ENCODE measurements at regions of chr1 and their contacts with region 1.

Region 1: DNA sequence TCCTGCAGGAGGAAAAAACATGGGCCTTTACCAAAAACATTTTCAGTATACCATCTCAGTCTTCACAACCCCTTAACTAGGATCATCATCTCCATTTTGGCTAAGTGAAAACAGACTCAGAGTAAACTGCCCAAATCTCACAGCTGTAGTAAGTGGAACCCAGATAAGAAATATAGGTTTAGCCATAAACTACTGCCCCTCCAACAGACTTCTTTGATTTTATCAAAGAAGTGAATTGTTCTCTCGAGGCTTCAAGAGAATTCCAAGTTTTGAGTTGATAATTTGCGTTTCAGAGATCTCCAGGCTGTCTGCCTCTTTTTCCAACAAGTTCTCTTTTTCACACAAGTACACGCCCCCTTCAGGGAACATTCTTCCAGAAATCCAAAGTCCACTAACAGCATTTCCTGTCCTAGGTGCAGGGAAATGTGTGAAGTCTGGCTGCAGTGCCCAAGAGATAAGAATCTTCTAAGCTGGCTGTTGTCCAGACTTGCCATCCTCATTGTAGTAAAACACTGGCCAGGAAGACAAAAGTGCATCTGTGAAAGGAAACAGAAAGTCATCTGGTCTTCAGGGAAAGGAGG is 30.8 kb downstream of the RNF19B start:
- DNase-seq: peak; percentile 95
- H3K4me3 ChIP-seq: no peak overlapping the region
- H3K27ac ChIP-seq: peak overlapping the region; percentile 33
- H3K4me1 ChIP-seq: peaks cover 21% of the 10 kb centered on the region
- H3K27me3 ChIP-seq: no peaks in the 10 kb centered on the region
- CTCF ChIP-seq: no peak
- POLR2A ChIP-seq: peak; percentile 16

Region 2: GRCh38 chr1:32612189-32612881 is 321.5 kb before region 1 on chr1:
- CTCF ChIA-PET with region 1: no interaction called
- POLR2A ChIA-PET with region 1: no interaction called
- dilution Hi-C with region 1: no loop called
- intact Hi-C with region 1: no loop called
- DNase-seq: peak; percentile 86
- H3K4me3 ChIP-seq: peak overlapping the region; percentile 9 to 48 (median 44)
- H3K27ac ChIP-seq: peak overlapping the region; percentile 29
- H3K4me1 ChIP-seq: no peaks in the 10 kb centered on the region
- H3K27me3 ChIP-seq: no peaks in the 10 kb centered on the region
- CTCF ChIP-seq: peak in 1 of 2 donors; percentile 56
- POLR2A ChIP-seq: peak; percentile 90

Region 3: DNA sequence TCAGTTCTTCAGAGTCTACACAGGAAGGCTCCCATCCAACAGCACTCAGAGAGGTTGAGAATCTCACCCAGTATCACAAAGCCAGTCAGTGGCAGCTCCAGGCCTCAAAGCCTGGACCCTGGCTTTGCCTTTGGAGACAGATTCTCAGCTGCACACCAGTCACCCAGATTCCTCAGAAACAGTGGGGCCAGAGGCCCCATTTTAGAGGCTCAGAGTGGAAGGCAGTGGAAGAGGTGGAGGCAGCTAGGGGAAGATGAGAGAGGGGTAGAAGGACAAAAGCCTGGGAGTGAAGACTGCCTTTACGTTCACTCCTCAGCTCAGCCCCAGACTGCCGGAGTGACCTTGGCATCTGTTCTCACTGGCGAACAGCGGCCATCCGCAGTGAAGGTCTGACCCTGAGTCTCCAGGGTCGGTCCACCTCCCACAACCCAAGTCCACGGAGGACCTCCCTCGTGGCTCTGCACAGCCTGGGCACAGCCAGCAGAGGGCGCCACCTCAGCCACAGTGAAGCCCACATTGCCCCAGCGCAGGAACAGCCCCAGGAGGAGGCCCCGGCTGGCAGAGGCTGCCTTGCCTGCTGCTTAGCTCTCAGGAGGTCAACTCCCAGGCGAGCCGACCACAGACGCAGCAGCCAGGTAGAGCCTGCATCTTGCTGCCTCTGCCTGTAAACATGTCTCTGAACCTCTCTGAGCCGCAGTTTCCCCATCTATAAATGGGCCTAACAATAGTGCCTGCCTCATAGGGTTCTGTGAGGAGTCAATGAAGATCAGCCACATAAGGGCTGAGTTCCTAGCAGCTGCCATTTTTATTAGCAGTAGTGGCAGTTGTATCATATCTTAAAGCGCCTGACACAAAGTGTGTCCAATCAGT is 57.3 kb before region 1 on chr1:
- CTCF ChIA-PET with region 1: interaction called, 8 read pairs
- POLR2A ChIA-PET with region 1: no interaction called
- dilution Hi-C with region 1: no loop called
- intact Hi-C with region 1: loop called (anchors 2 kb)
- DNase-seq: peak; percentile 58
- H3K4me3 ChIP-seq: no peak overlapping the region
- H3K27ac ChIP-seq: no peak overlapping the region
- H3K4me1 ChIP-seq: no peaks in the 10 kb centered on the region
- H3K27me3 ChIP-seq: peaks cover 6 to 9% of the 10 kb centered on the region in 2 experiments
- CTCF ChIP-seq: peak; percentile 89 to 99
- POLR2A ChIP-seq: no peak

Region 4: GRCh38 chr1:32964461-32965250 is 30.8 kb after region 1 on chr1 and contains the start of gene RNF19B:
- CTCF ChIA-PET with region 1: interaction called, 21 read pairs
- POLR2A ChIA-PET with region 1: interaction called, 3 read pairs
- dilution Hi-C with region 1: no loop called
- intact Hi-C with region 1: loop called (anchors 1 kb)
- DNase-seq: peak; percentile 95
- H3K4me3 ChIP-seq: peak within 1 kb of the TSS; percentile 76 to 98 (median 78)
- H3K27ac ChIP-seq: peak within 1 kb of the TSS; percentile 36
- H3K4me1 ChIP-seq: peaks cover 20% of the 10 kb centered on the region
- H3K27me3 ChIP-seq: no peaks in the 10 kb centered on the region
- CTCF ChIP-seq: no peak
- POLR2A ChIP-seq: peak; percentile 99
- total RNA-seq, gene RNF19B: 24.2 and 25.6 TPM in 2 replicates

Region 5: GRCh38 chr1:32992489-32993323 is 58.9 kb after region 1 on chr1:
- CTCF ChIA-PET with region 1: interaction called, 15 read pairs
- POLR2A ChIA-PET with region 1: no interaction called
- dilution Hi-C with region 1: no loop called
- intact Hi-C with region 1: no loop called
- DNase-seq: peak; percentile 46
- H3K4me3 ChIP-seq: no peak overlapping the region
- H3K27ac ChIP-seq: peak overlapping the region; percentile 36
- H3K4me1 ChIP-seq: peaks cover 41% of the 10 kb centered on the region
- H3K27me3 ChIP-seq: no peaks in the 10 kb centered on the region
- CTCF ChIP-seq: no peak
- POLR2A ChIP-seq: no peak

Region 6: DNA sequence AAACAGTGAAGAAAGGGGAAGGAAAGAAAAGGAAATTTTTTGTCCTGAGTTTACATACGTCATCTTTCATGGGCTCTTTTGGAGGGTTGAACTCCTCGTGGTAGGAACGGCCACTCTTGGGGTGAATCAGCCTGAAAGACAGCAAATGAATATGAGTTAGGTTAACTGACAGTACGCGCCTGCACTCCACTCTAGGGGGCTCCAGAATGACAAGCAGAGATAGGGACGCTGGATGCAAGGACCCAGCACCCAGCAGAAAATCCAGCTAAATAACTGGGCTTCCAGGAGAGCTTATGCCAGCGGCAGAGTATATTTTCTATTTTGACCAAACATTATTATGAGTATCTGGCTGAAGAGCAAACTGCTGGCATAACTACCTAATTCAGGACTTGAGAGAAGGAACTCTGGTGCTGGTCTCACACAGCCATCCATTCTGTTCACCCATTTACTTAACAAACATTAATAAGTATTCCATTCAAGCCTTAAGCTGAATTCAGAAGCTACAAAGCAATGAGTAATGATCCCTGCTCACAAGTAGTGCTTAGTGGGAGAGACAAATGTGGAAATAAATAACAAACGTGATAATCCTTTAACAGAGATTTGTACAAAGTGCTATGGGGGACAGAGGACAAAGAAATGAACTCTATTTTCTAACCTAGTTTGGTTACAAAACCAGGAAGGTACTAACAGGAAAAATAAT is 80.8 kb after region 1 on chr1:
- CTCF ChIA-PET with region 1: interaction called, 340 read pairs
- POLR2A ChIA-PET with region 1: interaction called, 3 read pairs
- dilution Hi-C with region 1: no loop called
- intact Hi-C with region 1: no loop called
- DNase-seq: no peak
- H3K4me3 ChIP-seq: no peak overlapping the region
- H3K27ac ChIP-seq: no peak overlapping the region
- H3K4me1 ChIP-seq: no peaks in the 10 kb centered on the region
- H3K27me3 ChIP-seq: no peaks in the 10 kb centered on the region
- CTCF ChIP-seq: no peak
- POLR2A ChIP-seq: no peak

Region 7: DNA sequence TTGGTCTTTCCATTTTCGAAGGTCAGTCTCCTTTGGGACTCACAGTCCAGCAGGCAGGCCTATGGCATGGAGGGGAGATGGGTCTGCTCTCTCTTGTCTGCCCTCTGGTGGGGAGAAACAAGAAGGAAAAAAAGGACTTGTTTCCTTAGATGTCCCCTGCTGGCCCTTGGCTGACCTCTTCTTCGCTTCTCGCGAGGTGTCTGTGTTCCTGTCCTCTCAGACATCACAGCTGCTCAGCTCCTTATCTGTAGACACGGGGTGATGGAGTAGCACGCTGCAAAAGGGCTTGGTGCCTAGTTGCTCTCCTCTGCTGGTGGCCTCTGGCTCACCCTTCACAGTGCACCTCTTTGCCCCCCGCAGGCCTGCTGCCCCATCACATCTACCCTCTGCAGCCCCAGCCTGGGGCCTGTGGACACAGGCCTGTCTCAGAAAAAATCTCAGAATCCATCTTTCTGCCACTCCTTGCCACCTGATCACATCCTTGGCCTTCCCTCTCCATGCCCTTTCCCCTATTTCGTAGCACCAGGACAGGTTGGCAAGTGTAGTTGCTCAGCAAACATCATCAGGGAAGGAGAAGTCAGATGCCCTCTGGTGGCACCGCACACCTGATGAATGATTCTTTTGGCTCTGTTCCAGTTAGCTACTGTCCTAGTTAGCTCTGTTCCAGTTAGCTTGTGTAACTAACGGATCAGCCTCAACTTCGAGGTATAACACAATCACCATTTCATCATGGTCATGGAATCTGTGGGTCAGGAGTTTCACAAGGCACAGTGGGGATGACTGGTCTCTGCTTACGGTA is 121.6 kb after region 1 on chr1:
- CTCF ChIA-PET with region 1: interaction called, 72 read pairs
- POLR2A ChIA-PET with region 1: interaction called, 5 read pairs
- dilution Hi-C with region 1: no loop called
- intact Hi-C with region 1: loop called (anchors 1 kb)
- DNase-seq: peak; percentile 86
- H3K4me3 ChIP-seq: no peak overlapping the region
- H3K27ac ChIP-seq: no peak overlapping the region
- H3K4me1 ChIP-seq: peaks cover 2% of the 10 kb centered on the region
- H3K27me3 ChIP-seq: no peaks in the 10 kb centered on the region
- CTCF ChIP-seq: peak; percentile 65 to 78
- POLR2A ChIP-seq: no peak

Region 8: GRCh38 chr1:33606272-33606671 is 672.4 kb after region 1 on chr1:
- CTCF ChIA-PET with region 1: no interaction called
- POLR2A ChIA-PET with region 1: no interaction called
- dilution Hi-C with region 1: no loop called
- intact Hi-C with region 1: no loop called
- DNase-seq: no peak
- H3K4me3 ChIP-seq: no peak overlapping the region
- H3K27ac ChIP-seq: no peak overlapping the region
- H3K4me1 ChIP-seq: no peaks in the 10 kb centered on the region
- H3K27me3 ChIP-seq: no peaks in the 10 kb centered on the region
- CTCF ChIP-seq: no peak
- POLR2A ChIP-seq: no peak

Measured in endothelial cell of umbilical vein (primary cell).